CD14-positive monocyte (primary cell): ENCODE measurements at regions of chr1 and their contacts with region 1.

Region 1: DNA sequence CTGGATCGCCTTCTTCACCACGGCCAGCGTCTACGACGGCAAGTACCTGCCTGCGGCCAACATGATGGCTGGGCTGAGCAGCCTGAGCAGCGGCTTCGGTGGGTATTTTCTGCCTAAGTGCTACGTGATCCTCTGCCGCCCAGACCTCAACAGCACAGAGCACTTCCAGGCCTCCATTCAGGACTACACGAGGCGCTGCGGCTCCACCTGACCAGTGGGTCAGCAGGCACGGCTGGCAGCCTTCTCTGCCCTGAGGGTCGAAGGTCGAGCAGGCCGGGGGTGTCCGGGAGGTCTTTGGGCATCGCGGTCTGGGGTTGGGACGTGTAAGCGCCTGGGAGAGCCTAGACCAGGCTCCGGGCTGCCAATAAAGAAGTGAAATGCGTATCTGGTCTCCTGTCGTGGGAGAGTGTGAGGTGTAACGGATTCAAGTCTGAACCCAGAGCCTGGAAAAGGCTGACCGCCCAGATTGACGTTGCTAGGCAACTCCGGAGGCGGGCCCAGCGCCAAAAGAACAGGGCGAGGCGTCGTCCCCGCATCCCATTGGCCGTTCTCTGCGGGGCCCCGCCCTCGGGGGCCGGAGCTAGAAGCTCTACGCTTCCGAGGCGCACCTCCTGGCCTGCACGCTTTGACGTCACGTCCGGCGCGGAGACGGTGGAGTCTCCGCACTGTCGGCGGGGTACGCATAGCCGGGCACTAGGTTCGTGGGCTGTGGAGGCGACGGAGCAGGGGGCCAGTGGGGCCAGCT is at the start of gene ZBTB48:
- DNase-seq: peak; percentile 97 to 98 (median 98)
- H3K4me3 ChIP-seq: peak within 1 kb of the TSS; percentile 61 to 83 (median 76)
- H3K4me3 Mint-ChIP-seq: peak within 1 kb of the TSS; percentile 96 to 97
- H3K27ac ChIP-seq: peak within 1 kb of the TSS; percentile 88 to 97
- H3K27ac Mint-ChIP-seq: peak within 1 kb of the TSS; percentile 97 to 100 (median 99)
- H3K4me1 ChIP-seq: peaks cover 33 to 34% of the 10 kb centered on the region in 2 donors
- H3K4me1 Mint-ChIP-seq: peaks cover 35% of the 10 kb centered on the region
- H3K27me3 ChIP-seq: no peaks in the 10 kb centered on the region
- H3K27me3 Mint-ChIP-seq: peaks cover 0 to 3% (median 1%) of the 10 kb centered on the region in 3 donors
- CTCF ChIP-seq: no peak
- polyA plus RNA-seq, gene ZBTB48: 13.2 to 94.2 (median 23.0) TPM

Region 2: GRCh38 chr1:6185635-6186382 is 393.7 kb before region 1 on chr1:
- intact Hi-C with region 1: no loop called
- DNase-seq: no peak
- H3K4me3 ChIP-seq: no peak overlapping the region
- H3K4me3 Mint-ChIP-seq: no peak overlapping the region
- H3K27ac ChIP-seq: no peak overlapping the region
- H3K27ac Mint-ChIP-seq: peak overlapping the region in 1 of 7 donors; percentile 64
- H3K4me1 ChIP-seq: peaks cover 0 to 3% of the 10 kb centered on the region in 2 donors
- H3K4me1 Mint-ChIP-seq: peaks cover 18% of the 10 kb centered on the region
- H3K27me3 ChIP-seq: peaks cover 11 to 22% of the 10 kb centered on the region in 2 donors
- H3K27me3 Mint-ChIP-seq: peaks cover 20 to 30% (median 22%) of the 10 kb centered on the region in 3 donors
- CTCF ChIP-seq: peak; percentile 51

Region 3: DNA sequence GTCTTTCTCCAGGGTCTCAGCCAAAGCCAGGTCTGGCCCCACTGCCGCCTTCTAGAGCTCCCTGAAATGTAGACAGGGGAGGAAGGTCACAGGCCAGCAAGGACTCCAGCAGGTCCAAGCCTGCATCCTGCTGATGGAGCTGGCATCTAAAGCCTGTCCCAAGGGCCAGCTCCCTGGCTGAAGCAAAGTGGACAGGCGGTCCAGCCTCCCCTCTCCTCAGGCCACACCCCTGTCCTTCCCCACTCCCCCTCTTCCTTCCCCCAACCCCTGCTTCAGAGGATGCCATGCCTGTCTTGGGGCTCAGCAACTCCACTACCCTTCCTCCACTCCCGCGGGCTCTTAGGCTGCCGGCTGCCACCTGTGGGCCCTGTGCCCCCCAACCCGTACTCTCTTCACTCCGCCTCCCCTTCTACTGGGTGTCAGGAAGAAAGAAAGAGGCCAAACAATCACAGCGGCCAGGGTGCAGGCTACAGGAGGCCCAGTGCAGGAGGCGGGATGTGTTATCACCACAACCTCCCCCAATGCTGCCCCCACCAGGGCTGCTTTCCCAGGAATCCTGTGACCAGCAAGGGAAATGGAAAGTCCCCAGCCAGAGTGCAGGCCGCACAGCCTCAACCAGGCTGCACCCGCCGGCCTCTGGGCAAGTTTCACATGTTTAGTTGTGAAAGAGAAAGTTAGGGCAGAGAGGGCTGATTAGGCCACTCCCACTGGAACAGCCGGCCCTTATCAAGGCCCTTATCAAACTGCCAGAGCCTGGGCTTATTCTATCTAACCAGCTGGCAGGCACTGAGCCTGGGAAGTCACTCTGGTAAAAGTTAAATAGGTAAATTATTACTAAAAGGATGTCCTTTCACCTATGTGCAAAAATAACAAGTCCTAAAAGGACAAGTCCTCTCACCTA is 220.1 kb before region 1 on chr1:
- intact Hi-C with region 1: no loop called
- DNase-seq: peak in 2 of 3 donors; percentile 14 to 16
- H3K4me3 ChIP-seq: no peak overlapping the region
- H3K4me3 Mint-ChIP-seq: peak overlapping the region; percentile 55 to 60
- H3K27ac ChIP-seq: no peak overlapping the region
- H3K27ac Mint-ChIP-seq: peak overlapping the region in 5 of 7 donors; percentile 46 to 70 (median 54)
- H3K4me1 ChIP-seq: peaks cover 9 to 19% of the 10 kb centered on the region in 2 donors
- H3K4me1 Mint-ChIP-seq: peaks cover 24% of the 10 kb centered on the region
- H3K27me3 ChIP-seq: no peaks in the 10 kb centered on the region
- H3K27me3 Mint-ChIP-seq: peaks cover 0 to 2% (median 0%) of the 10 kb centered on the region in 3 donors
- CTCF ChIP-seq: no peak

Region 4: GRCh38 chr1:6464514-6464836 is 115.1 kb before region 1 on chr1:
- intact Hi-C with region 1: no loop called
- DNase-seq: no peak
- H3K4me3 ChIP-seq: no peak overlapping the region
- H3K4me3 Mint-ChIP-seq: peak overlapping the region in 1 of 2 donors; percentile 42
- H3K27ac ChIP-seq: no peak overlapping the region
- H3K27ac Mint-ChIP-seq: peak overlapping the region in 1 of 7 donors; percentile 52
- H3K4me1 ChIP-seq: no peaks in the 10 kb centered on the region
- H3K4me1 Mint-ChIP-seq: peaks cover 3% of the 10 kb centered on the region
- H3K27me3 ChIP-seq: peaks cover 1 to 44% of the 10 kb centered on the region in 2 donors
- H3K27me3 Mint-ChIP-seq: peaks cover 33 to 59% (median 46%) of the 10 kb centered on the region in 3 donors
- CTCF ChIP-seq: no peak

Region 5: DNA sequence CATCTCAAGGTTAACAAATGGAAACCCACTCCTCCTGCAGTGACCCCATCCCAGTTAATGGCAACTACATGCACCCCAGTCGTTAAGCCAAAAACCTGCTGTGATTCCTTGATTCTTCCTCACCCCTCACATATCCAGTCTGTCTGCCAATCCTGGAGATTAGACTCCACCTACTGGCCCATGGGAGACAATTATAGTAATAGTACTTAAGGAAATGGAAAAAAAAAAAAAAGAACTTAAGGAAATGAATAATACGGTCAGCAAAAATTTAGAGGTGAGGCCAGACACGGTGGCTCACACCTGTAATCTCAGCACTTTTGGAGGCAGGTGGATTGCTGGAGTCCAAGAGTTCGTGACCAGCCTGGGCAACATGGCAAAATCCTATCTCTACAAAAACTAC is 32.2 kb before region 1 on chr1:
- intact Hi-C with region 1: no loop called
- DNase-seq: no peak
- H3K4me3 ChIP-seq: no peak overlapping the region
- H3K4me3 Mint-ChIP-seq: no peak overlapping the region
- H3K27ac ChIP-seq: no peak overlapping the region
- H3K27ac Mint-ChIP-seq: peak overlapping the region in 4 of 7 donors; percentile 27 to 60 (median 40)
- H3K4me1 ChIP-seq: peaks cover 6 to 7% of the 10 kb centered on the region in 2 donors
- H3K4me1 Mint-ChIP-seq: peaks cover 18% of the 10 kb centered on the region
- H3K27me3 ChIP-seq: no peaks in the 10 kb centered on the region
- H3K27me3 Mint-ChIP-seq: no peaks in the 10 kb centered on the region
- CTCF ChIP-seq: no peak

Region 6: DNA sequence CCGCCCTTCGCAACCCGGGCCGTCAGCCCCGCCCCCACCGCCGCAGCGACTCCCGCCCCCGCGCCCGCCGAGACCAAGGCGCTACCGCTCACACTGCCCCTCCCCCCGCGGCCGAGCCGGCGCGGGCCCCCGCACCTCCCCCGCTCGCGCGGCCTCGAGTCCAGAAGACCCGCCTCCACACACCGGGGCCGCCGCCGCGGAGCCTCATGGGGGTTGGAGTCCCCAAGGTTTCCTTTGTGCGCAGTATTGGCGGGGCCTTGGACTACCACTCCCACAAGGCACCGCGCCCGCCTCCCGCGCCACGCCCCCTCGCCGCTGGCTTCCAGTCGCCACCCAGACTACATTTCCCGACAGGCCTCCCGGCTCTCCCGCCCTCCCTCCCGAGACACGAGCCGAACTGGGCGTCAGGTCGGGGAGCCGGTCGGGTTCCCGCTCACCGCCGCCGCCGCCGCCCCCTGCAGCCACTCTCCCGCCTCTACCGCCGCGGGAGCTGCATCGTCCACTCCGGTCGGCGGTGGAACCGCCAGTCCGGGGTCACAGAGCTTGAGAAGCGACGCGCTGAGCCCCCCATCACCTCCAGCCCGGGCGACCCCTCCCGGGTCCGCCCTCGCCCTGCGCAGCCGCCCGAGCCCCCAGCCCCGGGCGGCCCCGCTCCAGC is 33.9 kb after region 1 on chr1 and contains the start of gene PHF13:
- intact Hi-C with region 1: loop called (anchors 1 to 5 kb)
- DNase-seq: peak; percentile 98
- H3K4me3 ChIP-seq: peak within 1 kb of the TSS; percentile 72 to 90 (median 89)
- H3K4me3 Mint-ChIP-seq: peak within 1 kb of the TSS; percentile 88 to 94
- H3K27ac ChIP-seq: peak within 1 kb of the TSS; percentile 31 to 76
- H3K27ac Mint-ChIP-seq: peak within 1 kb of the TSS; percentile 72 to 90 (median 80)
- H3K4me1 ChIP-seq: peaks cover 16 to 19% of the 10 kb centered on the region in 2 donors
- H3K4me1 Mint-ChIP-seq: peaks cover 16% of the 10 kb centered on the region
- H3K27me3 ChIP-seq: peaks cover 5 to 13% of the 10 kb centered on the region in 2 donors
- H3K27me3 Mint-ChIP-seq: peaks cover 11 to 21% (median 17%) of the 10 kb centered on the region in 3 donors
- CTCF ChIP-seq: no peak
- polyA plus RNA-seq, gene PHF13: 1.0 to 7.3 (median 1.7) TPM